ENCODE measurements at regions of chr9 and their contacts with region 1.

Region 1: DNA sequence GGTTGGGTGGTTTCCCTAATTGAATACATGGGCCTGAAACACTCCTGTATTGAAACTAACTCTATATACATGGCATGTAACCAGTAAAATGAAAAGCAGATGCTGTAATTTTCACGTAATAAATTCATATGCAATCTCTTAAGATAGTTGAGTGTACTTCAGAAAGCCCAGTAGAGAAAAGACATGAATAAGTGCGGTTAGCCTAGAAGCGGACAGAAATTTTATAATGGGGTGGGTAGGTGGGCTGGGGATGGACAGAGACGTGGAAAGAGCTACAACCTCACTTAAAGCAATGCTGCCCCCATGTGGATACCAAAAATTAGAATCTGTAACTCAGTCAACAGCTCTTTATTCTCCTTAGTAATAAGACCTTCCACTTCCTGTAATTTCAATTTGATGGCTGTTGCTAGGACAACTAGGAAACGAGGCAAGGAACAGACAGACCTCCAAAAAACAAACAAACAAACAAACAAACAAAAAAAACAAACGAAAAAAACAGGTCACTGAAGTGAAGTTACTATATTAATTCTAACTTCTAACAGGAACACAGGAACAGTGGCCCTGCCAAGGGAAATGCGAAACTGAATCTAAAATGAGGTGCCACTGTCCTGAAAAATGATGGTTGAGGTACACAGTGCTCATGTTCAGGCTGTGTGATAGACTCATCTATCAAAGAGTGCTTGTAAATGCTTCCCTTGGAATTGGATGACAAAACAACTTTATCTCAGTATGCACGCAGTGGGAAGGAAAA is 103.4 kb upstream of the GNA14 start:
- DNase-seq: peak; percentile 54
- H3K4me3 Mint-ChIP-seq: no peak overlapping the region
- H3K27ac Mint-ChIP-seq: no peak overlapping the region
- H3K4me1 Mint-ChIP-seq: peaks cover 8% of the 10 kb centered on the region
- H3K27me3 Mint-ChIP-seq: no peaks in the 10 kb centered on the region
- CTCF ChIP-seq: peak; percentile 21

Region 2: GRCh38 chr9:77433675-77434445 is 317.7 kb before region 1 on chr9:
- CTCF ChIA-PET with region 1: interaction called, 10 read pairs
- intact Hi-C with region 1: no loop called
- DNase-seq: peak; percentile 43
- H3K4me3 Mint-ChIP-seq: no peak overlapping the region
- H3K27ac Mint-ChIP-seq: no peak overlapping the region
- H3K4me1 Mint-ChIP-seq: peaks cover 7% of the 10 kb centered on the region
- H3K27me3 Mint-ChIP-seq: no peaks in the 10 kb centered on the region
- CTCF ChIP-seq: no peak

Region 3: DNA sequence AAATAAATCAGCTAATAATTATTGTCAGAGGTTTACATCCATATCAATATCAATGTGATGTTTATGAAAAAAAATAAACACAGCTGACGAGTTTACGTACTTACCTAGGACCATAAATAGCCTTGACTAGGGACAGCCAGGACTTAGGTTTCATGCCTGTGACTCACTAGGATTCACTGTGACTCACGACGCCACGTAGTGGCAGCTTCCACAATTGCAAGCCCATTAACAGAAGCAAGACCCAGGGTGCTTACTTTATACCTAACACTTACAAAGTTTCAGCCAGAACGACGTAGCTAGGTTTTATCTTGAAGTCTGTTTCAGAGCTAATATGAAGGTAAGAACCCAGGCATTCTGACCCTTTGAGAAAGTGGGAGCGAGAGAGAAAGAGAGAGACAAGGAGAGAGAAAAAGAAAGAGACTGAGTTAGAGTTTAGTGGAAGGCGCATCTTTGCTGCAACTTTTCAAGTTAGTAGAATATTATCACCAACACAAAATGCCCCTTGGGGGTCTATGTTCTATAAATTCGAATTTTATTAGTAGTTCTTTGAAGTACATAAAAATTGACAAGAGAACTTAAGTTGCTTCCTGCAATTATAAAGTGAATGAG is 294.6 kb before region 1 on chr9:
- CTCF ChIA-PET with region 1: interaction called, 8 read pairs
- intact Hi-C with region 1: loop called (anchors 1 kb)
- DNase-seq: peak; percentile 80
- H3K4me3 Mint-ChIP-seq: no peak overlapping the region
- H3K27ac Mint-ChIP-seq: no peak overlapping the region
- H3K4me1 Mint-ChIP-seq: peaks cover 8% of the 10 kb centered on the region
- H3K27me3 Mint-ChIP-seq: peaks cover 28% of the 10 kb centered on the region
- CTCF ChIP-seq: peak; percentile 49

Region 4: DNA sequence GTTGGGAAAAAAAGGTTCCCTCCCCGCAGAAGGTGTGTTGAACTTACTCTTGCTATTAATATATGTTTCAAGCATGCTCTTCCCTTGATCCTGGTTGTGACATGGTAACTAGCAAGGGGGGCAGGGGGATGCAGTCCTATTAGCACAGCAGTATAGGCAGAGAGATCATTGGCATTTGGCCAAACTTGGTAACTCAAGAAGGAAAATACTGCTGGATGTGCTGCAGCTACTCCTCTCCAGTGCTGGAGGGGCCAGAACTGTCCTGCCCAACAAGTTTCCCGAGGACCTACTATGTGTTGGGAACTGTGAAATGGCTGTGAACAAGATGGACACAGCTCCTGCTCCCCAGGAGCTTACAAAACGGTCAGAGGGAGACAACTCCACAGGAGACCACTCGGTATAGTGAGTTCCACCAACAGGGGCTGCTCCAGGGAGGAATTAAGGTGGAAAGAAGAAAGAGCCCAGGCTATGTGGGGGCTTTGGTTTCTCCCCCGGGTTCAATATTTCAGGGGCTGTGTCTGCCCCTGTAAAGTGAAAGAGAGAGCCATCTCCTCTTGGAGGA is 182.3 kb before region 1 on chr9:
- CTCF ChIA-PET with region 1: no interaction called
- intact Hi-C with region 1: loop called (anchors 10 kb)
- DNase-seq: no peak
- H3K4me3 Mint-ChIP-seq: no peak overlapping the region
- H3K27ac Mint-ChIP-seq: no peak overlapping the region
- H3K4me1 Mint-ChIP-seq: no peaks in the 10 kb centered on the region
- H3K27me3 Mint-ChIP-seq: no peaks in the 10 kb centered on the region
- CTCF ChIP-seq: no peak

Region 5: GRCh38 chr9:77663754-77664153 is 87.8 kb before region 1 on chr9:
- CTCF ChIA-PET with region 1: interaction called, 5 read pairs
- intact Hi-C with region 1: loop called (anchors 5 kb)
- DNase-seq: peak; percentile 64
- H3K4me3 Mint-ChIP-seq: no peak overlapping the region
- H3K27ac Mint-ChIP-seq: peak overlapping the region; percentile 19
- H3K4me1 Mint-ChIP-seq: peaks cover 27% of the 10 kb centered on the region
- H3K27me3 Mint-ChIP-seq: no peaks in the 10 kb centered on the region
- CTCF ChIP-seq: no peak

Measured in Calu3 (cell line).